ENCODE measurements at regions of chr4 and their contacts with region 1.

Region 1: DNA sequence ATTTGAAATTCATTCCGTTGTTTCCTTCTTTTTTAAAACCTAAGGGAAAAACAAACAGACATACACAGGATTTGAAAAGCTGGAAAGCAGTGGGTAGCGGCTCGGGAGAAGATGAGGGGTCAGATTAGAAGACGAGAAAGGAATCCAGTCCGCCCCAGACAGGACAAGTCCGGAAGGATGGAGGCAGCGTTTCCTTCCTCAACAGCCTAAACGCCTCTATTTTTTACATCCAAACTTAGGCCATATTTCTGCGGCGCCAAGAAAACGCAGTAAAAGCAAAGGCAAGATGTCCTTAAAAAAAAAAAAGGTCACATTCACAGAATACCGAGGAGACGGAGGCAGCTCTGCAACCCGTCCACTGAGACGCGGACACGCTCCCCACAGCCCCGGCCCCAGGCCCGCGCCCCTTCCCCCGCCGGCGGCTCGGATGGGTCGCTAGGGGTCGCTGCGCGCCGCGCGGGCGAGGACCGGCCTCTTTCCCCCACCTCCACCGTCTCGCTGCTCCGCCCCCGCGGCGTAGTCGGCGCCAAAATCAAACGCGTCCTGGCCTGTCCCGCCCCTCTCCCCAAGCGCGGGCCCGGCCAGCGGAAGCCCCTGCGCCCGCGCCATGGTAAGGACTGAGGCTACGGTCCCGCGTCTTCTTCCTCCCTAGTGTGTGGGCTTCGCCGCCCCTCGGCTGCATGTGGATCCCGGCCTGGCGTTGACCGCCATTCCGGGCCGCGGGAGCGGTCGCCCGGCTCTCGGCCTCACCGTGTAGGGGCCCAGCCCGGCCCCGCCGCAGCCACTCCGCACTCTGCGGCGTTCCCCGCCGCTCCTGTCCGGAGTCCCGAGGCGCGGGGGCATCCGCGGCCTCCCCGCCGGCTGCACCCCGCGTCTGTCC is at the start of gene MND1:
- DNase-seq: peak; percentile 82 to 97 (median 92)
- ATAC-seq: peak; percentile 97
- H3K4me3 ChIP-seq: peak within 1 kb of the TSS; percentile 58
- H3K4me3 Mint-ChIP-seq: peak within 1 kb of the TSS; percentile 89 to 97 (median 94)
- H3K27ac ChIP-seq: peak within 1 kb of the TSS; percentile 60
- H3K27ac Mint-ChIP-seq: peak within 1 kb of the TSS; percentile 26 to 90 (median 76)
- H3K4me1 ChIP-seq: peaks cover 0 to 8% of the 10 kb centered on the region in 2 donors
- H3K4me1 Mint-ChIP-seq: peaks cover 4 to 43% (median 27%) of the 10 kb centered on the region in 7 donors
- H3K27me3 ChIP-seq: no peaks in the 10 kb centered on the region
- H3K27me3 Mint-ChIP-seq: peaks cover 0 to 23% (median 6%) of the 10 kb centered on the region in 5 donors
- total RNA-seq, gene MND1: 13.5 TPM in 1 of 5 experiments, not detected in the others

Region 2: GRCh38 chr4:153426207-153426885 is 82.0 kb after region 1 on chr4:
- CTCF ChIA-PET with region 1: interaction called, 15 read pairs
- POLR2A ChIA-PET with region 1: interaction called, 13 read pairs
- intact Hi-C with region 1: loop called in 1 of 2 experiments (anchors 1 kb)
- DNase-seq: peak in 7 of 9 donors; percentile 68 to 89 (median 82)
- ATAC-seq: peak; percentile 88
- H3K4me3 ChIP-seq: peak overlapping the region; percentile 5
- H3K4me3 Mint-ChIP-seq: peak overlapping the region in 9 of 10 donors; percentile 47 to 80 (median 76)
- H3K27ac ChIP-seq: peak overlapping the region; percentile 79
- H3K27ac Mint-ChIP-seq: peak overlapping the region; percentile 88 to 98 (median 96)
- H3K4me1 ChIP-seq: peaks cover 18 to 57% of the 10 kb centered on the region in 2 donors
- H3K4me1 Mint-ChIP-seq: peaks cover 22 to 69% (median 62%) of the 10 kb centered on the region in 7 donors
- H3K27me3 ChIP-seq: no peaks in the 10 kb centered on the region
- H3K27me3 Mint-ChIP-seq: no peaks in the 10 kb centered on the region

Region 3: GRCh38 chr4:153448003-153448731 is 103.8 kb after region 1 on chr4:
- CTCF ChIA-PET with region 1: no interaction called
- POLR2A ChIA-PET with region 1: no interaction called
- intact Hi-C with region 1: no loop called
- DNase-seq: no peak
- ATAC-seq: no peak
- H3K4me3 ChIP-seq: no peak overlapping the region
- H3K4me3 Mint-ChIP-seq: no peak overlapping the region
- H3K27ac ChIP-seq: no peak overlapping the region
- H3K27ac Mint-ChIP-seq: peak overlapping the region in 2 of 9 donors; percentile 64 to 92
- H3K4me1 ChIP-seq: peaks cover 8 to 16% of the 10 kb centered on the region in 2 donors
- H3K4me1 Mint-ChIP-seq: peaks cover 21 to 44% (median 36%) of the 10 kb centered on the region in 7 donors
- H3K27me3 ChIP-seq: no peaks in the 10 kb centered on the region
- H3K27me3 Mint-ChIP-seq: no peaks in the 10 kb centered on the region

Region 4: DNA sequence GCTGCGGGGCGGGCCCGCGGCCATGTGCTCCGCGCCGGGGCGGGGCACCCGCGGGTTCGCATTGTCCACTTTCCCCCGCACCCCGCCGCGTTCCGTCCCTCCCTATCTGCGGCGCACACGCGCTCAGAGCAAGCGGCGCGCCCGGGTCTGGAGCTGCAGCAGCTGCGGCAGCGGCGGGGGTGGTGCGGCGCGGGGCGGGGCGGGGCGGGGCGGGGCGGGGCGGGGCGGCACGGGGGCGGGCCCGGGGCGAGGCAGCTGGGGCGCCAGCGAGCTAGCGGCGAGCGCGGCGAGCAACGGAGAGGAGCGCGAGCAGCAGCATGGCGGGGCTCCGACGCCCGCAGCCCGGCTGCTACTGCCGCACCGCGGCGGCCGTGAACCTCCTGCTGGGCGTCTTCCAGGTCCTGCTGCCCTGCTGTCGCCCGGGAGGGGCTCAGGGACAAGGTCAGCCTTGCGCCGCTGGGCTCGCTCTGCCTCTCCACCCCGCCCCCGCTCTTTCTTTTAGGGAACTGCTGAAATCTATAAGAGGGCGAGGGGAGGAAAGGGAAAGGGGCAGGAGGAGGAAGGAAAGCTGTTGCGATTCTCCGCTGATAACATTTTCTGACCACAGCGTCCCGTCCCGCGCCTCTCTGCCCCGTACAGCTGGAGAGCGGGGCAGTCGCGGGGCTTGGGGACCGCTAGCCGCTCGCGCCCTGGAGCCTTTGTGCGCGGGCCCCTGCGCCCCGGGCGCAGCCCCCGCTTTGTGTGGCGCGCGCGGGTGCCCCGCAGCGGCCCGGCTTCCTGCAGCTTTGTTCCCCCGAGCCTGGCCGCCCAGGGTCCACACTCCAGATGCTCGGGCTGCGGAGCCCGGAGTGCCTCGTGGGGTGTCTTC is 121.9 kb after region 1 on chr4 and contains the start of gene TMEM131L:
- CTCF ChIA-PET with region 1: interaction called, 8 read pairs
- POLR2A ChIA-PET with region 1: interaction called, 10 read pairs
- intact Hi-C with region 1: loop called (anchors 1 kb)
- DNase-seq: peak; percentile 63 to 77 (median 69)
- ATAC-seq: peak; percentile 91
- H3K4me3 ChIP-seq: peak within 1 kb of the TSS; percentile 75
- H3K4me3 Mint-ChIP-seq: peak within 1 kb of the TSS; percentile 94 to 100 (median 96)
- H3K27ac ChIP-seq: peak within 1 kb of the TSS; percentile 91
- H3K27ac Mint-ChIP-seq: peak within 1 kb of the TSS; percentile 93 to 99 (median 98)
- H3K4me1 ChIP-seq: peaks cover 29 to 32% of the 10 kb centered on the region in 2 donors
- H3K4me1 Mint-ChIP-seq: peaks cover 32 to 61% (median 44%) of the 10 kb centered on the region in 7 donors
- H3K27me3 ChIP-seq: no peaks in the 10 kb centered on the region
- H3K27me3 Mint-ChIP-seq: no peaks in the 10 kb centered on the region
- total RNA-seq, gene TMEM131L: 45.8 to 111 (median 97.7) TPM

Region 5: DNA sequence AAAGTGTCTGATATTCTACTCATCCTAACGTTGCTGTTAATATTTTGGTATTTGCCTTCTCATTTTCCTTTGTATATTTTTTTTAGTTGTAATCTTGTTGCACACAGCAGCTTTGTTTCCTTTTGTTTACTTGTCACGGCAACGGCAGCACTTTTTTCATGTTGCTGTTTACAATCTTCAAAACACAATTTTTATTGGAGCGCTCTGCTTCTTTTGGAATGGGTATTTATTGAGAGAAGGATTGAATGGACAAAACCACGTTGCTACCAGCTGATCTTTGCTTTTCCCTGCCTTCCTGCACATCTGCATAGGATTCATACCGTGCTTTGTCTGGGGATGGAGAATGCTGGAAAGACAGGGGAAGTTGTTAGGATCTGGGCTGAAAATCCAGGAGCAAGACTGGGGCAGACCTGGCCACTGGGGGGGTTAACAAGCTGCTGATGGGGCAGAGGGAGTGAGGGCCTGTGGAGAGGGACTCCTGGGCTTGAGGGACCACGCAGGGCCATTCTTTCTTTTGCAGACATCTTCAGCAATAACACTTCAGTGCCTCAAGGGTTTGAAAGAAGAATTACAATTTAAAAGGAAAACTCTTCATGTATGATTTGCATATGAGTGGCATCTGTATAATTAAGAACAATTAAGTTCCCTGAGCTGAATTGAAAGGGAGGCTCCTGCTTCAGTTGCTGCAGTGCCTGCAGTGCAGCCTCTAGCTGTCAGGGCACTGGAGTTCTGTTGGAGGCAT is 191.6 kb after region 1 on chr4:
- CTCF ChIA-PET with region 1: interaction called, 5 read pairs
- POLR2A ChIA-PET with region 1: no interaction called
- intact Hi-C with region 1: loop called in 1 of 2 experiments (anchors 1 kb)
- DNase-seq: peak in 2 of 9 donors; percentile 34 to 39
- ATAC-seq: peak; percentile 52
- H3K4me3 ChIP-seq: no peak overlapping the region
- H3K4me3 Mint-ChIP-seq: peak overlapping the region; percentile 16 to 79 (median 63)
- H3K27ac ChIP-seq: peak overlapping the region; percentile 62
- H3K27ac Mint-ChIP-seq: peak overlapping the region; percentile 80 to 98 (median 91)
- H3K4me1 ChIP-seq: peaks cover 29 to 87% of the 10 kb centered on the region in 2 donors
- H3K4me1 Mint-ChIP-seq: peaks cover 58 to 100% (median 94%) of the 10 kb centered on the region in 7 donors
- H3K27me3 ChIP-seq: no peaks in the 10 kb centered on the region
- H3K27me3 Mint-ChIP-seq: no peaks in the 10 kb centered on the region

Region 6: DNA sequence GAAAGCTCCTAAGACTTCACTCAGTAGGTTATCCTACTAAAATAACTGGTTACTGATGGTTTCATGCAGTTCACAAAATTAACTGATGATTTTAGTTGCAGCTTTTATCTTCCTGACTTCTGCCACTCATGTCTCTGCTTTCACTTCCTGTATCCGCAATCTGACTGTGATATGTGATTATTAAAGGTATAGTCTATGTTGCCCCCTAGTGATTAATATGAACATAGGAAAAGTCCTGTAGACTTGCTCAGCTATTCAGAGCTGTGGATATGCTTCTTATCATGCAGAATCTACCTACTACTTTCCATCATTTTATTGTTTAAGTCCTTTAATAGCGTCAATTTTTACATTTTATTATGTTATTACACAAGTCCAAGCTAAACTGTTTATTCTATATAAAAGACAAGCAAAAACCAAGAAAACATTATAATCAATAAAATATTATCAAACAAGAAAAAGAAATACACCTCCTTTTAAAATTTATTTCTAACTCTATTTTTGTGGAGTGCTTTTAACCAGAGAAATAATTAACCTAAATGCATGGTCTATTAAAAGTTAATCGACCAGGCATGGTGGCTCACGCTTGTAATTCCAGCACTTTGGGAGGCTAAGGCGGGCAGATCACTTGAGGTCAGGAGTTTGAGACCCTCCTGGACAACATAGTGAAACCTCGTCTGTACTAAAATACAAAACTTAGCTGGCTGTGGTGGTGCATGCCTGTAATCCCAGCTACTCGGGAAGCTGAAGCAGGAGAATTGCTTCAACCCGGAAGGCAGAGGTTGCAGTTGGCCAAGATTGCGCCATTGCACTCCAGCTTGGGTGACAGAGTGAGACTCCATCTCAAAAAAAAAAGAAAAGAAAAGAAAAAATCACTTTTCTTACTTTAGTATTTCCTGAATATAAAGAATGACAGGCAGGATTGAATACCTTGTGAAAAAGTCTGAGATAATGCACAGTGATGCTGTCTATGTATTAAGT is 299.3 kb after region 1 on chr4:
- CTCF ChIA-PET with region 1: interaction called, 13 read pairs
- POLR2A ChIA-PET with region 1: no interaction called
- intact Hi-C with region 1: loop called (anchors 1 kb)
- DNase-seq: peak in 7 of 9 donors; percentile 25 to 73 (median 56)
- ATAC-seq: peak; percentile 91
- H3K4me3 ChIP-seq: no peak overlapping the region
- H3K4me3 Mint-ChIP-seq: peak overlapping the region in 6 of 10 donors; percentile 0 to 46 (median 22)
- H3K27ac ChIP-seq: no peak overlapping the region
- H3K27ac Mint-ChIP-seq: peak overlapping the region in 7 of 9 donors; percentile 0 to 69 (median 8)
- H3K4me1 ChIP-seq: no peaks in the 10 kb centered on the region
- H3K4me1 Mint-ChIP-seq: peaks cover 4 to 22% (median 18%) of the 10 kb centered on the region in 7 donors
- H3K27me3 ChIP-seq: no peaks in the 10 kb centered on the region
- H3K27me3 Mint-ChIP-seq: no peaks in the 10 kb centered on the region

Region 7: GRCh38 chr4:154551872-154552686 is 1207.7 kb after region 1 on chr4:
- CTCF ChIA-PET with region 1: no interaction called
- POLR2A ChIA-PET with region 1: no interaction called
- intact Hi-C with region 1: loop called in 1 of 2 experiments (anchors 10 kb)
- DNase-seq: peak; percentile 25 to 70 (median 61)
- ATAC-seq: peak; percentile 61
- H3K4me3 ChIP-seq: no peak overlapping the region
- H3K4me3 Mint-ChIP-seq: peak overlapping the region in 2 of 10 donors; percentile 12 to 17
- H3K27ac ChIP-seq: no peak overlapping the region
- H3K27ac Mint-ChIP-seq: peak overlapping the region in 3 of 9 donors; percentile 41 to 67 (median 43)
- H3K4me1 ChIP-seq: peaks cover 6 to 18% of the 10 kb centered on the region in 2 donors
- H3K4me1 Mint-ChIP-seq: peaks cover 13 to 36% (median 31%) of the 10 kb centered on the region in 7 donors
- H3K27me3 ChIP-seq: no peaks in the 10 kb centered on the region
- H3K27me3 Mint-ChIP-seq: peaks cover 0 to 5% (median 0%) of the 10 kb centered on the region in 5 donors